CD4-positive, alpha-beta T cell (primary cell): ENCODE measurements at regions of chr20 and their contacts with region 1.

Region 1: GRCh38 chr20:63864847-63865640 is at the start of gene TPD52L2:
- DNase-seq: peak; percentile 94 to 99 (median 97)
- ATAC-seq: peak; percentile 88
- H3K4me3 ChIP-seq: peak within 1 kb of the TSS; percentile 98
- H3K4me3 Mint-ChIP-seq: peak within 1 kb of the TSS; percentile 97
- H3K27ac ChIP-seq: peak within 1 kb of the TSS; percentile 78 to 89
- H3K27ac Mint-ChIP-seq: peak within 1 kb of the TSS; percentile 85
- H3K4me1 ChIP-seq: peaks cover 37% of the 10 kb centered on the region
- H3K4me1 Mint-ChIP-seq: peaks cover 31% of the 10 kb centered on the region
- H3K27me3 ChIP-seq: no peaks in the 10 kb centered on the region
- H3K27me3 Mint-ChIP-seq: no peaks in the 10 kb centered on the region
- CTCF ChIP-seq: no peak
- total RNA-seq, gene TPD52L2: 15.1 to 15.3 TPM

Region 2: GRCh38 chr20:63520504-63520933 is 344.5 kb before region 1 on chr20 and contains the start of gene PPDPF:
- CTCF ChIA-PET with region 1: no interaction called
- POLR2A ChIA-PET with region 1: interaction called, 11 read pairs
- intact Hi-C with region 1: no loop called
- DNase-seq: peak; percentile 75 to 95 (median 84)
- ATAC-seq: peak; percentile 80
- H3K4me3 ChIP-seq: peak within 1 kb of the TSS; percentile 65
- H3K4me3 Mint-ChIP-seq: peak within 1 kb of the TSS; percentile 88
- H3K27ac ChIP-seq: peak within 1 kb of the TSS in 1 of 2 donors; percentile 35
- H3K27ac Mint-ChIP-seq: peak within 1 kb of the TSS; percentile 69
- H3K4me1 ChIP-seq: peaks cover 29% of the 10 kb centered on the region
- H3K4me1 Mint-ChIP-seq: peaks cover 13% of the 10 kb centered on the region
- H3K27me3 ChIP-seq: no peaks in the 10 kb centered on the region
- H3K27me3 Mint-ChIP-seq: no peaks in the 10 kb centered on the region
- CTCF ChIP-seq: no peak
- total RNA-seq, gene PPDPF: 249 to 251 TPM

Region 3: GRCh38 chr20:63580796-63581461 is 284.1 kb before region 1 on chr20:
- CTCF ChIA-PET with region 1: no interaction called
- POLR2A ChIA-PET with region 1: interaction called, 3 read pairs
- intact Hi-C with region 1: loop called in 1 of 2 experiments (anchors 1 kb)
- DNase-seq: peak; percentile 62 to 87 (median 76)
- ATAC-seq: peak; percentile 99
- H3K4me3 ChIP-seq: no peak overlapping the region
- H3K4me3 Mint-ChIP-seq: no peak overlapping the region
- H3K27ac ChIP-seq: no peak overlapping the region
- H3K27ac Mint-ChIP-seq: peak overlapping the region; percentile 19
- H3K4me1 ChIP-seq: peaks cover 10% of the 10 kb centered on the region
- H3K4me1 Mint-ChIP-seq: peaks cover 20% of the 10 kb centered on the region
- H3K27me3 ChIP-seq: no peaks in the 10 kb centered on the region
- H3K27me3 Mint-ChIP-seq: no peaks in the 10 kb centered on the region
- CTCF ChIP-seq: peak; percentile 63

Region 4: GRCh38 chr20:63739130-63740069 is 125.6 kb before region 1 on chr20 and contains the start of gene SLC2A4RG:
- CTCF ChIA-PET with region 1: interaction called, 4 read pairs
- POLR2A ChIA-PET with region 1: interaction called, 13 read pairs
- intact Hi-C with region 1: no loop called
- DNase-seq: peak in 11 of 14 experiments; percentile 49 to 90 (median 72)
- ATAC-seq: peak; percentile 8
- H3K4me3 ChIP-seq: peak within 1 kb of the TSS; percentile 92
- H3K4me3 Mint-ChIP-seq: peak within 1 kb of the TSS; percentile 80
- H3K27ac ChIP-seq: peak within 1 kb of the TSS; percentile 34 to 53
- H3K27ac Mint-ChIP-seq: no peak within 1 kb of the TSS
- H3K4me1 ChIP-seq: peaks cover 56% of the 10 kb centered on the region
- H3K4me1 Mint-ChIP-seq: peaks cover 16% of the 10 kb centered on the region
- H3K27me3 ChIP-seq: no peaks in the 10 kb centered on the region
- H3K27me3 Mint-ChIP-seq: no peaks in the 10 kb centered on the region
- CTCF ChIP-seq: no peak
- total RNA-seq, gene SLC2A4RG: 123 to 125 TPM

Region 5: DNA sequence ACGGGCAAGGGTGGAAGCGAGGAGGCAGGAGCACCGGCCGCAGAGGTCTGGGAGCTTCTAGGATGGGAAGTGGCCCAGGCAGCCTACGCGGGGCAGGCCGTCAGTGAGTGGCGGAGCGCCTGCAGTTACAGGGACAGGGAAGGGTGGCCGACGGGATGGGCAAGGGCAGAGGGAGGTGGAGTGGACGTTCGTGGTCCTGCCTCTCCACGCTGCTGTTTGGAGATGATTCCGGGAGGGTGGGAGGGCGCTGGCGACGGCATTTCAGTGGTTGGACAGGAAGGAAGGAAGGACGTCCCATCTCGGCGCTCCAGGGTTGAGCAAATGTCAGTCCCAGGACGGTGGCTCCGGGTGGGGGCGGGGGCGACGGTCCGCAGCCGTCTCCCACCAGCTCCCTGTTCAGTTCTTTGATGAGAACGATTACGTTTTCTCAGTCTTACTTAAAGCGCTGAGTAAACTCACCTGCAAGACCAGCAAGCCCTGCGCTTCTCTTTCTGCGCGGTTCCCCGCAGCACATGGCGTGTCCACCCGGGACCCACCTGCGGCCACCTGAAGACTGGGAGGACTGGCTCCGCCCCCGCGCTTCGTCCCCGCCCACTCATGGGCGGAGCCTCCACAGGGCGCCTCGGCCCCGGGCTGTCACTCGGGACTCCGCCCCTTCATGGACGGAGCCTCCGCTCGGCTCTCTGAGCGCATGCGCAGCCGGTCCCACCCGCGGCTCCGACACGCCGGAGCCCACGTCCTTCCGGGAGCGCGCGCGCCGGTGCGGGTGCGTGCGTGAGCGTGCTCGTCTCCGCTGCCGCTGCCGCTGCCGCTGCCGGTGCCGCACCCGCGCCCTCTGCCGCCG is 29.5 kb after region 1 on chr20 and contains the start of gene DNAJC5:
- CTCF ChIA-PET with region 1: interaction called, 3 read pairs
- POLR2A ChIA-PET with region 1: interaction called, 23 read pairs
- intact Hi-C with region 1: loop called in 1 of 2 experiments (anchors 2 kb)
- DNase-seq: peak; percentile 94 to 99 (median 98)
- ATAC-seq: peak; percentile 88
- H3K4me3 ChIP-seq: peak within 1 kb of the TSS; percentile 61
- H3K4me3 Mint-ChIP-seq: peak within 1 kb of the TSS; percentile 99
- H3K27ac ChIP-seq: peak within 1 kb of the TSS; percentile 59 to 75
- H3K27ac Mint-ChIP-seq: peak within 1 kb of the TSS; percentile 93
- H3K4me1 ChIP-seq: peaks cover 41% of the 10 kb centered on the region
- H3K4me1 Mint-ChIP-seq: peaks cover 47% of the 10 kb centered on the region
- H3K27me3 ChIP-seq: no peaks in the 10 kb centered on the region
- H3K27me3 Mint-ChIP-seq: no peaks in the 10 kb centered on the region
- CTCF ChIP-seq: no peak
- total RNA-seq, gene DNAJC5: 21.4 to 22.5 TPM

Region 6: GRCh38 chr20:63980806-63981728 is 116.0 kb after region 1 on chr20 and contains the start of gene PRPF6:
- CTCF ChIA-PET with region 1: interaction called, 16 read pairs
- POLR2A ChIA-PET with region 1: interaction called, 16 read pairs
- intact Hi-C with region 1: loop called in 1 of 2 experiments (anchors 1 kb)
- DNase-seq: peak; percentile 89 to 98 (median 94)
- ATAC-seq: peak; percentile 58
- H3K4me3 ChIP-seq: peak within 1 kb of the TSS; percentile 69
- H3K4me3 Mint-ChIP-seq: peak within 1 kb of the TSS; percentile 90
- H3K27ac ChIP-seq: peak within 1 kb of the TSS; percentile 85 to 87
- H3K27ac Mint-ChIP-seq: peak within 1 kb of the TSS; percentile 98
- H3K4me1 ChIP-seq: peaks cover 60% of the 10 kb centered on the region
- H3K4me1 Mint-ChIP-seq: peaks cover 67% of the 10 kb centered on the region
- H3K27me3 ChIP-seq: no peaks in the 10 kb centered on the region
- H3K27me3 Mint-ChIP-seq: no peaks in the 10 kb centered on the region
- CTCF ChIP-seq: peak; percentile 93
- total RNA-seq, gene PRPF6: 50.6 to 51.3 TPM

Region 7: GRCh38 chr20:64188682-64189529 is 323.9 kb after region 1 on chr20:
- CTCF ChIA-PET with region 1: no interaction called
- POLR2A ChIA-PET with region 1: no interaction called
- intact Hi-C with region 1: no loop called
- DNase-seq: no peak
- ATAC-seq: no peak
- H3K4me3 ChIP-seq: no peak overlapping the region
- H3K4me3 Mint-ChIP-seq: no peak overlapping the region
- H3K27ac ChIP-seq: no peak overlapping the region
- H3K27ac Mint-ChIP-seq: no peak overlapping the region
- H3K4me1 ChIP-seq: peaks cover 8% of the 10 kb centered on the region
- H3K4me1 Mint-ChIP-seq: peaks cover 4% of the 10 kb centered on the region
- H3K27me3 ChIP-seq: peaks cover 4 to 7% of the 10 kb centered on the region in 2 experiments
- H3K27me3 Mint-ChIP-seq: peaks cover 32% of the 10 kb centered on the region
- CTCF ChIP-seq: no peak